CD4-positive, alpha-beta T cell (primary cell): ENCODE measurements at regions of chr19 and their contacts with region 1.

Region 1: DNA sequence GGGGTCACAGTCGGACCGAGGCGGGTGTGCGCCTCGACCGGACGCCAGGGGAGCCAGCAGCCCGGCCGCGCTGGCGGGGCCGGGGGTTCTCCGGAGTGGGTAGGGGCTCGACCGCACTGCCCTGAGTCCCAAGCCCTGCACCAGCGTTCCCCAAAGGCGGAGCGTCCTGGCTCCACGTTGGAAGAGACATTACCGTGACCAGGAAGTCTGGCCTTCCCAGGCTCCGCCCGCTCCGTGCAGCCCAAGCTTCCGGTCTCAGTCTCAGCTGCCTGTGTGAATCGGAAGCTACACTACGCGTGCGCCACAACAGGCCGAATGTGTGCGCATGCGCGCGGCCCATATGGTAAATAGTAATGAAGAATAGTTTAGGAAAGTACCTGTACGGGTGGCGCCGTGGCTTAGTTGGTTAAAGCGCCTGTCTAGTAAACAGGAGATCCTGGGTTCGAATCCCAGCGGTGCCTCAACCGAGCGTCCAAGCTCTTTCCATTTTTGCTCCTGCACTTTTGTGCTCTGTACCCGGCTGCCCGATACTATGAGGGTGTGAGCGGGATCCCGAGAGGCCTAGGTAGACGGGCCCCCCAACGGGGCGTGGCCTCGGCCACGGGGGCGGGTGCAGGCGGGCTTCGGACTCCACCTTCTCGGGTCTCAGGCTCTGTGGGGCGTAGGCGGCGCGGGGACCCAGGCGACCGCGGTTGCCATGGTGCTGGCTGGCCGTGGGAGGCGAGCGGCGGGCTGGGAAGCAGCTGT is 17.3 kb upstream of the LRP3 start:
- DNase-seq: peak; percentile 86 to 100 (median 96)
- ATAC-seq: peak; percentile 69
- H3K4me3 ChIP-seq: peak overlapping the region; percentile 91
- H3K4me3 Mint-ChIP-seq: peak overlapping the region; percentile 100
- H3K27ac ChIP-seq: peak overlapping the region; percentile 82 to 97
- H3K27ac Mint-ChIP-seq: peak overlapping the region; percentile 100
- H3K4me1 ChIP-seq: peaks cover 39% of the 10 kb centered on the region
- H3K4me1 Mint-ChIP-seq: peaks cover 52% of the 10 kb centered on the region
- H3K27me3 ChIP-seq: no peaks in the 10 kb centered on the region
- H3K27me3 Mint-ChIP-seq: peaks cover 10% of the 10 kb centered on the region
- CTCF ChIP-seq: no peak

Region 2: DNA sequence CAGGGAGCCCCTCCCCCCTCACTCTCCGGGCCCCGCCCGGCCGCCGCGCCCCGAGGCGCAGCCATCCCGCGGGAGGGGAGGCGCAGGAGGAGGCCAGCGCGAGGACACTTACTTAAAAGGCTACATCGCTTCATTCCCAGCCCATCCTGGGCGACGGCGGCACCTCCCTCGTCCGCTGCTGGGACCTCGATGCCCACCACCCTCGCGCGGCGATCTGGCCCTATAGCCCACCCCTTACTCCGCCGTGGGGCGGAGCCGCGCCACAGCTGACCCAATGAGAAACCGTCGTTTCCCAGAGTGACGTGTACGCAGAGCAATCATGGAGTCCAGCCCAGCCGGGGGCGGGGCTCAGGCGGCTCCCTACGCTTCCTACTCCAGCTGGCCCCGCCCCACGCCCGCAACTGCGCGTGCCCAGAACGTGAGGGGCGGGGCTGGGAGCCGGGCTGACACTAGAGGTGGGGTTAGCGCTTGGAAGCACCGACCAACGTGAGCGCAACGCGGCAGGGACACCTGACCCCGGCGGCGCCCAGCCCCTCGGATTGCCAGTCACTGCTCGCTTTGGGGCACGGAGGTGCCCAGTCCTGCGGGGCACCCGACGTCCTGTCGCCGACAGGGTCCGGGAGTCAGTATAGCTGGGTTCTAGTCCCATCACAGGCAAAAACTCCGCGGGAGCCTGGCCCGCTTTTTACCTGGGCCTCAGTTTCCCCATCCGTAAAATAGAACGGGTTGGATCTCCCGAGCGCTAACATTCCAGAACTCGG is 501.7 kb before region 1 on chr19 and contains the start of gene ANKRD27:
- CTCF ChIA-PET with region 1: no interaction called
- POLR2A ChIA-PET with region 1: interaction called, 14 read pairs
- intact Hi-C with region 1: loop called in 1 of 2 experiments (anchors 5 kb)
- DNase-seq: peak; percentile 94 to 99 (median 98)
- ATAC-seq: peak; percentile 94
- H3K4me3 ChIP-seq: peak within 1 kb of the TSS; percentile 89
- H3K4me3 Mint-ChIP-seq: peak within 1 kb of the TSS; percentile 95
- H3K27ac ChIP-seq: peak within 1 kb of the TSS in 1 of 2 donors; percentile 80
- H3K27ac Mint-ChIP-seq: peak within 1 kb of the TSS; percentile 79
- H3K4me1 ChIP-seq: peaks cover 53% of the 10 kb centered on the region
- H3K4me1 Mint-ChIP-seq: peaks cover 50% of the 10 kb centered on the region
- H3K27me3 ChIP-seq: peaks cover 14 to 21% of the 10 kb centered on the region in 2 experiments
- H3K27me3 Mint-ChIP-seq: peaks cover 8% of the 10 kb centered on the region
- CTCF ChIP-seq: no peak
- total RNA-seq, gene ANKRD27: 16.5 to 17.6 TPM

Region 3: GRCh38 chr19:33125929-33126388 is 50.9 kb before region 1 on chr19:
- CTCF ChIA-PET with region 1: no interaction called
- POLR2A ChIA-PET with region 1: interaction called, 5 read pairs
- intact Hi-C with region 1: loop called in 1 of 2 experiments (anchors 5 kb)
- DNase-seq: peak; percentile 33 to 82 (median 39)
- ATAC-seq: peak; percentile 98
- H3K4me3 ChIP-seq: no peak overlapping the region
- H3K4me3 Mint-ChIP-seq: no peak overlapping the region
- H3K27ac ChIP-seq: no peak overlapping the region
- H3K27ac Mint-ChIP-seq: no peak overlapping the region
- H3K4me1 ChIP-seq: peaks cover 4% of the 10 kb centered on the region
- H3K4me1 Mint-ChIP-seq: peaks cover 8% of the 10 kb centered on the region
- H3K27me3 ChIP-seq: no peaks in the 10 kb centered on the region
- H3K27me3 Mint-ChIP-seq: no peaks in the 10 kb centered on the region
- CTCF ChIP-seq: peak; percentile 85

Region 4: DNA sequence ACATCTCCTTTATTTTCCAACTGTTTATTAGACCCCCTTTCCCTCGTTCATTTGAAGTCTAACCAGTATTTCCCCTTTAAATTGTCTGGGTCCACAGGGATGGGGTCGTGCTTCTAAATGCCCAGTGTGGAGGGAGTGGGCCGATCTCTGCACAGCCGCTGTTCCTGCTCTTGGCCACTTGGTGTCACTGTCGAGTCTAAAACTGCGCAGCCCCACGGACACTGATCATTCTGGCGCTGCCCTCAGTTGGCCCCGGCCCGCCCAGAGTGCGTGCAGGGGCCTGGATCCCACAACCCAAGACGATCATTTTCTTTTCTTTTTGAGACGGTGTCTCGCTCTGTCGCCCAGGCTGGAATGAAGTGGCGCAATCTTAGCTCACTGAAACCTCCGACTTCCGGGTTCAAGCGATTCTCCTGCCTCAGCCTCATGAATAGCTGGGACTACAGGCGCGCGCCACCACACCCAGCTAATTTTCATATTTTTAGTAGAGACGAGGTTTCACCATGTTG is 32.9 kb before region 1 on chr19:
- CTCF ChIA-PET with region 1: interaction called, 13 read pairs
- POLR2A ChIA-PET with region 1: interaction called, 12 read pairs
- intact Hi-C with region 1: loop called (anchors 1 to 2 kb)
- DNase-seq: peak; percentile 30 to 83 (median 51)
- ATAC-seq: peak; percentile 99
- H3K4me3 ChIP-seq: no peak overlapping the region
- H3K4me3 Mint-ChIP-seq: no peak overlapping the region
- H3K27ac ChIP-seq: no peak overlapping the region
- H3K27ac Mint-ChIP-seq: no peak overlapping the region
- H3K4me1 ChIP-seq: peaks cover 5% of the 10 kb centered on the region
- H3K4me1 Mint-ChIP-seq: peaks cover 5% of the 10 kb centered on the region
- H3K27me3 ChIP-seq: no peaks in the 10 kb centered on the region
- H3K27me3 Mint-ChIP-seq: peaks cover 4% of the 10 kb centered on the region
- CTCF ChIP-seq: peak; percentile 94

Region 5: GRCh38 chr19:33373701-33374421 is 197.0 kb after region 1 on chr19 and contains the start of gene CEBPG:
- CTCF ChIA-PET with region 1: interaction called, 8 read pairs
- POLR2A ChIA-PET with region 1: interaction called, 42 read pairs
- intact Hi-C with region 1: loop called (anchors 2 kb)
- DNase-seq: peak in 11 of 14 experiments; percentile 18 to 88 (median 58)
- ATAC-seq: peak; percentile 27
- H3K4me3 ChIP-seq: peak within 1 kb of the TSS; percentile 97
- H3K4me3 Mint-ChIP-seq: peak within 1 kb of the TSS; percentile 93
- H3K27ac ChIP-seq: peak within 1 kb of the TSS; percentile 86 to 91
- H3K27ac Mint-ChIP-seq: peak within 1 kb of the TSS; percentile 89
- H3K4me1 ChIP-seq: peaks cover 40% of the 10 kb centered on the region
- H3K4me1 Mint-ChIP-seq: peaks cover 51% of the 10 kb centered on the region
- H3K27me3 ChIP-seq: no peaks in the 10 kb centered on the region
- H3K27me3 Mint-ChIP-seq: no peaks in the 10 kb centered on the region
- CTCF ChIP-seq: peak; percentile 32
- total RNA-seq, gene CEBPG: 15.5 TPM